BJ (cell line): ENCODE measurements at regions of chr1 and their contacts with region 1.

Region 1: DNA sequence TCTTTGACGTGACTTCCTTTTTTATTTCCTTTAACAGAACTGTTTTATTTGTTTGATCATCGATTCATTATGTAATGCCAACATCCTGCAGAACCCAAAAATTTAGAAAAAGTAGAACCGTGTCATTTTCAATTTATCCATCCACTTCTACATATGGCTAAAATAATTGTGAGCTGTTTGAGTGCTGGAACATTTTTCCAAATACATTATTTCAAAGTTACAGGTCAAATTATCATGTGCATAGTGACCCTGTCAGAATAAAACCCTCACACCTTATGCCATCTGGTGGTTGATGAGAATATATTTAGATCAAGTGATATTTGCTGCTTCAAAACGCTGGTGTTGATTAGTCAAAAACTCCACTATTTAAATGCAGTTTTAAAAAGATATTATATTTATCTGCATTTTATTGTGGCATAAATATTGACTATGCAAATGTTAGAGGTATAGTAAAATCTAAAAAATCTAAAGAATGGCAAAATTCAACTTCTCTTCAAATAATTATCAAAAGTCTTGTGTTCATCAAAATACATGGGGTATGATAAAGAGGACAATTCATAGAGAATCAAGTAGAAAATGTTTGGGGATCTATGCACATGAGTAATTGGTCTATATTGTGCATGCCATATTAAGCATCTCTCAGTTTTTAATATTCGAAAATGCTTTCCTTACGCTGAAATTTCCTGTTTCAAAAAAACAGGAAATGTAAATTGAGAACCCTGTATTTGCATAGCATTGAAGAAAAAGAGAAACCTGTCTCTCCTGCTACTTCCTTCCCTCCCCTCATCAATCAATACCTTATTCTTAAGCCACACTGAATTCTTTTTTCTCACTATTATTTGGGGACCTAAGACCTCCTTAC is 39.7 kb downstream of the UBE2U start:
- DNase-seq: no peak
- H3K4me3 ChIP-seq: no peak overlapping the region
- H3K27me3 ChIP-seq: no peaks in the 10 kb centered on the region; the same call in 1 of the 2 replicates
- CTCF ChIP-seq: peak; percentile 35

Region 2: GRCh38 chr1:63615768-63616420 is 627.2 kb before region 1 on chr1:
- CTCF ChIA-PET with region 1: interaction called, 16 read pairs
- POLR2A ChIA-PET with region 1: no interaction called
- DNase-seq: no peak
- H3K4me3 ChIP-seq: no peak overlapping the region
- H3K27me3 ChIP-seq: no peaks in the 10 kb centered on the region
- CTCF ChIP-seq: peak; percentile 61

Region 3: DNA sequence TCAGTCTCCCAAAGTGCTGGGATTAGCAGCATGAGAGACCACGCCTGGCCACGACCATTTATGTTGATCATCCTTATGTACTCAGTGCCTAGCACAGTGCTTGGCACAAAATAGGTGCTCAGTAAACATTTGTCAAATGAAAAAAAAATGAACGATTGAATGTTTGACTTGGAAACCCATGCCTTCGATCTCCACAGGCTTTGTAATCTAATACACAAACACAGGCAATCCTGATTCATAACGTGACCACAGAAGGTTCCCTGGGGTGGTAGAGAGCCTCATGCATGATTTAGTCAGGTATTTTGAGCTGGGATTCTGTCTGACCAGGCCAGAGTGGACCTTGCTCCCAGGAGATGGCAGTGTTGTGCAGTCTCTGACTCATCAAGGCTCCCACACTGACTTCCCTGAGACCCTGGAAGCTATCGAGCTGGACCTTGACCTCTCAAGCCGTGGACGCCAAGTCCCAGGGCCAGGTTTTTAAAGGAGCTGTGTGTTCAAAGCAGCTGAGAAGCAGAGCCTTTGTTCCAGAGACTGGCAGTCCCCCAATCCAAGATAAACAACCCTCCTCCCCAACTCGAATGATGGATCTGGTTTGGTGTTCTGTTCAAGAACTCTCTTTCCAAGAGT is 568.8 kb before region 1 on chr1:
- CTCF ChIA-PET with region 1: interaction called, 37 read pairs
- POLR2A ChIA-PET with region 1: no interaction called
- DNase-seq: no peak
- H3K4me3 ChIP-seq: no peak overlapping the region
- H3K27me3 ChIP-seq: no peaks in the 10 kb centered on the region
- CTCF ChIP-seq: peak; percentile 87

Region 4: DNA sequence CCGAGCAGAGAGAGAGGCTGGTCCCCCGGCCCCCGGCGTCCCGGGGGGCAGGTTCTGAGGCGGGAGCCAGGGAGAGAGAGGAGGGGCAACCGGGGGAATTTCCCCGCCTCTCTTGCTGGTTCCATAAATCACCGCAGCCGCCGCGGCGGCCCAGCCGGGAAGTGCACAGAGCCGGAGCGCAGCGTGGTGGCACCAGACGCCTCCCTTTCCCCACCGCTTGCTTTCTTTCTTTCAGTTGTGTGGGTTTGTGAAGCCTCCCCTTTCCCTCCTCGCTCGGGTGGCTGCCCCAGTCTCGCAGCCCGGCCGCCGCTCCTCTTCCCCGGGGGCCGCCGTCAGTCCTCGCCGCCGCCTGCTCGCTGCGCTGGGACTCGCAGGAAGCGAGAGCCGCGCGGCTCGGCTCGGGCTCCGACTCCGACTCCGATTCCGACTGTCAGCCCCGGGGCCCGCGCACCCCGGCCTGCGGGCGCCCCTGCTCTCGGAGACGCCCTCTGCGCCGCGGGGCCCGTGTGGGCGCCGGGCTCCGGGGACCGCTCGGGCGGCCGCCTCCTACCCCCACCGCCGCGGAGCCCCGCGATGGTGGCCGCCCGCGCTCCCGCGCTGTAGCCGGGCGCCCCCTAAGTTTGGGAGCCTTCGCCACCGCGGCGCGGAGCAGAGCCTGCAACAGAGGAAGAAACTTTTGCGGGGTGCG is 227.0 kb after region 1 on chr1 and contains the start of gene CACHD1:
- CTCF ChIA-PET with region 1: no interaction called
- POLR2A ChIA-PET with region 1: no interaction called
- DNase-seq: peak; percentile 19
- H3K4me3 ChIP-seq: peak within 1 kb of the TSS; percentile 64
- H3K27me3 ChIP-seq: peaks cover 4% of the 10 kb centered on the region; the same call in 1 of the 2 replicates
- CTCF ChIP-seq: peak; percentile 55
- polyA plus RNA-seq, gene CACHD1: 3.0 and 3.7 TPM in 2 replicates